CD8-positive, alpha-beta T cell (primary cell): ENCODE measurements at regions of chr22 and their contacts with region 1.

Region 1: GRCh38 chr22:37849089-37849751 is at the start of gene EIF3L:
- DNase-seq: peak; percentile 73 to 93 (median 87)
- ATAC-seq: peak; percentile 67
- H3K4me3 ChIP-seq: peak within 1 kb of the TSS; percentile 63 to 89
- H3K4me3 Mint-ChIP-seq: peak within 1 kb of the TSS; percentile 84
- H3K27ac ChIP-seq: peak within 1 kb of the TSS; percentile 60 to 88
- H3K27ac Mint-ChIP-seq: peak within 1 kb of the TSS; percentile 98
- H3K4me1 ChIP-seq: peaks cover 27% of the 10 kb centered on the region
- H3K4me1 Mint-ChIP-seq: peaks cover 43% of the 10 kb centered on the region
- H3K27me3 ChIP-seq: no peaks in the 10 kb centered on the region
- H3K27me3 Mint-ChIP-seq: no peaks in the 10 kb centered on the region
- CTCF ChIP-seq: no peak
- total RNA-seq, gene EIF3L: 510 to 518 TPM

Region 2: GRCh38 chr22:37353839-37354238 is 495.4 kb before region 1 on chr22:
- CTCF ChIA-PET with region 1: no interaction called
- POLR2A ChIA-PET with region 1: no interaction called
- intact Hi-C with region 1: no loop called
- DNase-seq: no peak
- ATAC-seq: no peak
- H3K4me3 ChIP-seq: no peak overlapping the region
- H3K4me3 Mint-ChIP-seq: no peak overlapping the region
- H3K27ac ChIP-seq: no peak overlapping the region
- H3K27ac Mint-ChIP-seq: no peak overlapping the region
- H3K4me1 ChIP-seq: no peaks in the 10 kb centered on the region
- H3K4me1 Mint-ChIP-seq: no peaks in the 10 kb centered on the region
- H3K27me3 ChIP-seq: no peaks in the 10 kb centered on the region
- H3K27me3 Mint-ChIP-seq: no peaks in the 10 kb centered on the region
- CTCF ChIP-seq: no peak

Region 3: DNA sequence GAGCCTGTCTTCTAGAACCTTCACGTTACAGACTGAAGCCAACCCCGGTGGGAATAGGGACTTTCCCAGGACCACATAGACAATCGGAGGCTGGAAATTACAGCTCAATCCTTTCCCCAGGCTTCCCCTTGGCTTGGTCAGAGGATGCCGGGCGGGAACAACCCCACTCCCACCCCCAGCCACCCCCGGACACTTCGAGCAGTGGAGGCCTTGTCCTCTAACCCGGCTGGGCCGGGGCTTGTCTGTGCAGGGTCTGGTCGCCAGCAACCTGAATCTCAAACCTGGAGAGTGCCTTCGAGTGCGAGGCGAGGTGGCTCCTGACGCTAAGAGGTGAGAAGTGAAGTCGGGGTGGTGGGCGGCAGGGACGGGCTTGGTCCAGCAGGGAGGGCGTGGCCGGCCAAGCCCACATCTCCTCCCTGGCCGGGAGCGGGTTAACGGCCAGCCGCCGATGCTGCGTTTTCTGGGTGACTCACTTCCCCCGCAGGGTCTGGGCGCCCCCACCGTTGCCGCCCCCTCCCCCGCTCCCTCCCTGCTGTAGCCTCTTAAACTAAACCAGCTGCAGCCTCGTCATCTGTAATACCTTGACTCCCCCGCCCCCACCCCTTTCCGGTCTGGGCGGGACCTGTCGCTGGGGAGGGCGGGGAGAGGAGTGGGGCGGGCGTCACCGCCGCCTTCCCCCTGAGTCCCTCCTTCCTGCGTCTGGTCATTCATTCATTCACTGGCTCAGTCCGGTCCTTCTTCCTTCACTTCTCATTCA is 172.3 kb before region 1 on chr22:
- CTCF ChIA-PET with region 1: no interaction called
- POLR2A ChIA-PET with region 1: no interaction called
- intact Hi-C with region 1: loop called (anchors 1 to 2 kb)
- DNase-seq: peak; percentile 85 to 96 (median 94)
- ATAC-seq: peak; percentile 89
- H3K4me3 ChIP-seq: peak overlapping the region; percentile 73 to 93
- H3K4me3 Mint-ChIP-seq: peak overlapping the region; percentile 95
- H3K27ac ChIP-seq: peak overlapping the region; percentile 91 to 95
- H3K27ac Mint-ChIP-seq: peak overlapping the region; percentile 100
- H3K4me1 ChIP-seq: peaks cover 50% of the 10 kb centered on the region
- H3K4me1 Mint-ChIP-seq: peaks cover 55% of the 10 kb centered on the region
- H3K27me3 ChIP-seq: no peaks in the 10 kb centered on the region
- H3K27me3 Mint-ChIP-seq: no peaks in the 10 kb centered on the region
- CTCF ChIP-seq: no peak

Region 4: GRCh38 chr22:37745548-37746365 is 103.5 kb before region 1 on chr22:
- CTCF ChIA-PET with region 1: no interaction called
- POLR2A ChIA-PET with region 1: no interaction called
- intact Hi-C with region 1: loop called (anchors 1 to 10 kb)
- DNase-seq: peak; percentile 69 to 91 (median 85)
- ATAC-seq: peak; percentile 96
- H3K4me3 ChIP-seq: peak overlapping the region; percentile 67 to 85
- H3K4me3 Mint-ChIP-seq: peak overlapping the region; percentile 90
- H3K27ac ChIP-seq: peak overlapping the region; percentile 37 to 39
- H3K27ac Mint-ChIP-seq: peak overlapping the region; percentile 81
- H3K4me1 ChIP-seq: peaks cover 26% of the 10 kb centered on the region
- H3K4me1 Mint-ChIP-seq: peaks cover 18% of the 10 kb centered on the region
- H3K27me3 ChIP-seq: no peaks in the 10 kb centered on the region
- H3K27me3 Mint-ChIP-seq: no peaks in the 10 kb centered on the region
- CTCF ChIP-seq: no peak

Region 5: GRCh38 chr22:37807410-37808293 is 41.6 kb before region 1 on chr22 and contains the start of gene GCAT:
- CTCF ChIA-PET with region 1: no interaction called
- POLR2A ChIA-PET with region 1: interaction called, 4 read pairs
- intact Hi-C with region 1: loop called in 1 of 2 experiments (anchors 1 kb)
- DNase-seq: peak; percentile 63 to 92 (median 83)
- ATAC-seq: peak; percentile 91
- H3K4me3 ChIP-seq: peak within 1 kb of the TSS; percentile 51 to 55
- H3K4me3 Mint-ChIP-seq: peak within 1 kb of the TSS; percentile 75
- H3K27ac ChIP-seq: no peak within 1 kb of the TSS
- H3K27ac Mint-ChIP-seq: no peak within 1 kb of the TSS
- H3K4me1 ChIP-seq: peaks cover 37% of the 10 kb centered on the region
- H3K4me1 Mint-ChIP-seq: peaks cover 36% of the 10 kb centered on the region
- H3K27me3 ChIP-seq: peaks cover 17 to 66% of the 10 kb centered on the region in 2 experiments
- H3K27me3 Mint-ChIP-seq: peaks cover 47% of the 10 kb centered on the region
- CTCF ChIP-seq: no peak
- total RNA-seq, gene GCAT: 1.3 to 1.6 TPM

Region 6: DNA sequence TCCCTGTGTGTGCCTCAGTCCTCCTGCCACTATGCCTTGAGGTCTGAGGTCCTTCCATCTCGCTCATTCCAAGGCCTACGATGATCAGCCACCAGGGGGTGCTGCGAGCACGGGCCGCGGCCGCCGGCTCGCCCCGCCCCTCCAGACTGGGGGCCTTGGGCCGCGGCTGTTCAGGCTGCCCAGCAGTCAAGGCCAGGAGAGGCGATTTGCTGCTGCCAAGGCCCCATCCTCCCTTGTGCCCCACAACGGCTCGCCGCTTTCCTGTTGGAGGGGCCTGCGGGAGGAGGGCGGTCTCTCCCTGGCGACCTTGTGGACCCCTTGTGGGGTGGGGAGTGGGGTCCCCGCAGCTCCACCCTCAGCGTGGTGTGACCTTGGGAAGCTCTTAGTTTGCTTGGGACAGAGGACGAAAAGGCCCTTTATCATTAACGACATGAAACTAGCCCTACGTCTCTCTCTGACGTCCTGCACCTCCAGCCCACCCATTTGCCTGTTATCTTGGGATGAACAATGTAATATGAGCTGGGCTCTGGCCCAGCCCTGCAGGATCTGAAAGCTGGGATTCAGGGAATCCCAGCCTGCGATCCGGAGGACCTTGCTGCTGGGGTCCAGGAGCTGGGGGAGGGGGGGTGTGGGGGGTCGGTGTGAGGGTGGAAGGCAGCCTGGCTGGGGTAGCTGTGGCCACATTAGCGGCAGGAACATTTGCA is 31.4 kb before region 1 on chr22:
- CTCF ChIA-PET with region 1: interaction called, 16 read pairs
- POLR2A ChIA-PET with region 1: interaction called, 7 read pairs
- intact Hi-C with region 1: loop called in 1 of 2 experiments (anchors 1 kb)
- DNase-seq: peak; percentile 64 to 88 (median 81)
- ATAC-seq: peak; percentile 86
- H3K4me3 ChIP-seq: peak overlapping the region; percentile 20 to 38
- H3K4me3 Mint-ChIP-seq: peak overlapping the region; percentile 65
- H3K27ac ChIP-seq: no peak overlapping the region
- H3K27ac Mint-ChIP-seq: no peak overlapping the region
- H3K4me1 ChIP-seq: peaks cover 16% of the 10 kb centered on the region
- H3K4me1 Mint-ChIP-seq: peaks cover 15% of the 10 kb centered on the region
- H3K27me3 ChIP-seq: peaks cover under 1 to 4% of the 10 kb centered on the region in 2 experiments
- H3K27me3 Mint-ChIP-seq: peaks cover 17% of the 10 kb centered on the region
- CTCF ChIP-seq: peak; percentile 86

Region 7: GRCh38 chr22:37884420-37884819 is 35.2 kb after region 1 on chr22:
- CTCF ChIA-PET with region 1: no interaction called
- POLR2A ChIA-PET with region 1: no interaction called
- intact Hi-C with region 1: no loop called
- DNase-seq: no peak
- ATAC-seq: no peak
- H3K4me3 ChIP-seq: no peak overlapping the region
- H3K4me3 Mint-ChIP-seq: no peak overlapping the region
- H3K27ac ChIP-seq: no peak overlapping the region
- H3K27ac Mint-ChIP-seq: no peak overlapping the region
- H3K4me1 ChIP-seq: no peaks in the 10 kb centered on the region
- H3K4me1 Mint-ChIP-seq: peaks cover 20% of the 10 kb centered on the region
- H3K27me3 ChIP-seq: no peaks in the 10 kb centered on the region
- H3K27me3 Mint-ChIP-seq: no peaks in the 10 kb centered on the region
- CTCF ChIP-seq: no peak

Region 8: DNA sequence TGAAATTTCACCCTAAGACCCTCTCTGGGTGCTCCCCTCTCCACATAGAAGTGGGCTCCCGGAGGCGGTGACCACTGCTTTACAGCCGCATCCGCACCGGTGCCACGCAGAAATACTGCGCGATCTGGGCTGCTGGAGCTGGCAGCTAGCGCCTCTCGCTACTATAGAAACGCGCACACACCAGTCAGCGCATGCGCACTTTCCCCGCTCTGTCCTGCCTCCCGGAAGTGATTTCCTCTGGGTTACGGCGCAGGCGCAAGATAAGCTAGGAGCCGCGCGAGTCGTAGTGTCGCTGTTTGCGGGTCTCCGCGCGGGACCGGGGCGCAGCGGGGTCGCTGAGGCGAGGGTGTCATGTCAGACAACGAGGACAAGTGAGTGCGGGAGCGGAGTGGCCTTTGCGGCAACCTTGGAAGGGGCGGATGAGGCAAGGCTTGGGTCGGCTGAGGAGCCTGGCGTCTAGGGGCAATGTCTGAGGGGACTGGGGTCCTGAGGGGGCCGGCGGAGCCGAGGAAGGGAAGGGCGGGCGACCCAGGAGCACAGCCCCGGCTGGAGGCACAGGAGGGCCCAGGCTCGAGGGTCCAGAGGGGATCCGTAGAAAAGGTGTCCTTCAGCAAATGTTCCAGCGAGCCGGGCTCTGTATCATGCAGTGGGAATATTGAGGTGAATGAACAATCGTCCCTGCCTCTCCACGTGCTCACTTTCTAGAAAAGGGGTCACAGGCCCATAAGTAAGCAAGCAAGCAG is 104.4 kb after region 1 on chr22 and contains the starts of genes C22orf23 and POLR2F:
- CTCF ChIA-PET with region 1: no interaction called
- POLR2A ChIA-PET with region 1: no interaction called
- intact Hi-C with region 1: loop called (anchors 1 kb)
- DNase-seq: peak; percentile 88 to 98 (median 97)
- ATAC-seq: peak; percentile 94
- H3K4me3 ChIP-seq: peak within 1 kb of the TSS; percentile 91 to 98
- H3K4me3 Mint-ChIP-seq: peak within 1 kb of the TSS; percentile 100
- H3K27ac ChIP-seq: peak within 1 kb of the TSS; percentile 62 to 79
- H3K27ac Mint-ChIP-seq: peak within 1 kb of the TSS; percentile 98
- H3K4me1 ChIP-seq: peaks cover 13% of the 10 kb centered on the region
- H3K4me1 Mint-ChIP-seq: peaks cover 45% of the 10 kb centered on the region
- H3K27me3 ChIP-seq: peaks cover 0 to 6% of the 10 kb centered on the region in 2 experiments
- H3K27me3 Mint-ChIP-seq: peaks cover 12% of the 10 kb centered on the region
- CTCF ChIP-seq: no peak
- total RNA-seq, gene C22orf23: 0.43 TPM in 1 of 2 experiments, not detected in the other
- total RNA-seq, gene POLR2F: 22.7 to 25.6 TPM

Region 9: DNA sequence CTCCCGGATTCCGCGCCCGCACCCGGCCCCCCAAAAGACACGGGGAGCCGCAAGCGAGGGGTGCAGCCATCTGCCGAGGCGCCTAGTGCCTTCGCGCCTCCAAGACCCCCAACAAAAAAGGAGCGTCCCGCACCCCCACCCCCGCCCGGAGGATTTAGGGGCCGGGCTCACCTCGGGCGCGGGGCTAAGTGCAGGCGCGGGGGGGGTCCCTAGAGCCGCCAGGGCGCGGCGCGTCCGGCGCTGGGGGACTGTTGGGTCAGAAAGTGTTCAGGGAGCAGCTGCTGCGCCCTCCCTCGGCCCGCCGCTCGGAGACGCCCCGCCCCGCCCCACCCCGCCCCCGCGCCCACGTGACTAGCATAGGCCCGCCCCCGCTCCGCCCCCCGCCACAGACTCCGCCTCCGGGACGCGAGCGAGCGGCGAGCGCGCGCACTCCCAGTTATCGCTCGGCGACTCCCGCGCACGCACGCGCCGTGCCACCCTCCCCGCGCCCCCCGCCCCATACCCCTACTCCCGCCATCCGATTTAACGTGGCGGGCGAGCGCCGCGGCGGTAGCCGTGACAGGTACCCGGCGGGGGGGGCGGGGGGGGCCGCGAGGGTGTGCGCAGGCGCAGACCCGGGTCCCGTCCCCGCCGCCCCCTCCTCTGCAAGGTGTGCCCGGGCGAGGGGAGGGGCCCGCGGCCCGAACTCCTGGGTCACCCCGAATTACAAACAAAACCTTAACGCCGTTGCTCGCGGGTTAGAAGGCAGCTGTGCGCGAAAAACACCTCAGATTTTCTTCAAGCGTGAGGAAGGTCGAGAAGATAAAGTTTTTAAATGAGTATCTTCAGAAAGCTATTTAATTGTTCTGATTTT is 549.6 kb after region 1 on chr22:
- CTCF ChIA-PET with region 1: no interaction called
- POLR2A ChIA-PET with region 1: no interaction called
- intact Hi-C with region 1: loop called in 1 of 2 experiments (anchors 10 kb)
- DNase-seq: peak; percentile 67 to 91 (median 82)
- ATAC-seq: peak; percentile 79
- H3K4me3 ChIP-seq: peak overlapping the region; percentile 55 to 60
- H3K4me3 Mint-ChIP-seq: peak overlapping the region; percentile 81
- H3K27ac ChIP-seq: peak overlapping the region in 1 of 2 experiments; percentile 30
- H3K27ac Mint-ChIP-seq: no peak overlapping the region
- H3K4me1 ChIP-seq: no peaks in the 10 kb centered on the region
- H3K4me1 Mint-ChIP-seq: peaks cover 18% of the 10 kb centered on the region
- H3K27me3 ChIP-seq: no peaks in the 10 kb centered on the region
- H3K27me3 Mint-ChIP-seq: no peaks in the 10 kb centered on the region
- CTCF ChIP-seq: no peak